Activated T-helper 2 cell treated with anti-CD3 and anti-CD28 coated beads, Interferon-gamma antibody, Interleukin-2, Interleukin-4, amounts not matched to agents 10 μg/mL and 5 μg/mL and 100 μg/mL, durations not matched to agents 14 hours and 24 hours and 36 hours (primary cell): ENCODE measurements at regions of chr2 and their contacts with region 1.

Region 1: DNA sequence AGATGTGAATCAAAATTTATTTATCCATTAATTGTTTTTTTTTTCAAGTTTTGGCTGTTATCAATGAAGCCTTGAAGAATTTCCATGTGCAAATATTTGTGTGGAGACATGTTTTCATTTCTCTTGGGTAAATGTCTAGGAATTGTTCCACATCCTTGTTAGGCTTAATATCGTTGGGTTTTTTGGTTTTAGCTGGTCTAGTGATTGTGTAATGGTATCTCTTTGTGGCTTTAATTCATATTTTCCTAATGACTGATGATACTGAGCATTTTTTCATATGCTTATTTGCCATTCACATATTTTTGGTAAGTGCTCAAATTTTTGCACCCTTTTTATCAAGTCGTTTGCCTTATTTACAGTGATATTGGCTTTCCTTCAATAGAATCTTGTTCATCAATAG is 250.3 kb upstream of the EPHA4 start:
- DNase-seq: no peak
- H3K4me3 Mint-ChIP-seq: no peak overlapping the region
- H3K27ac Mint-ChIP-seq: no peak overlapping the region
- H3K4me1 Mint-ChIP-seq: no peaks in the 10 kb centered on the region
- H3K27me3 Mint-ChIP-seq: no peaks in the 10 kb centered on the region

Region 2: GRCh38 chr2:220748875-220749479 is 1073.4 kb before region 1 on chr2:
- intact Hi-C with region 1: loop called (anchors 10 kb)
- DNase-seq: no peak
- H3K4me3 Mint-ChIP-seq: no peak overlapping the region
- H3K27ac Mint-ChIP-seq: no peak overlapping the region
- H3K4me1 Mint-ChIP-seq: no peaks in the 10 kb centered on the region
- H3K27me3 Mint-ChIP-seq: no peaks in the 10 kb centered on the region

Region 3: DNA sequence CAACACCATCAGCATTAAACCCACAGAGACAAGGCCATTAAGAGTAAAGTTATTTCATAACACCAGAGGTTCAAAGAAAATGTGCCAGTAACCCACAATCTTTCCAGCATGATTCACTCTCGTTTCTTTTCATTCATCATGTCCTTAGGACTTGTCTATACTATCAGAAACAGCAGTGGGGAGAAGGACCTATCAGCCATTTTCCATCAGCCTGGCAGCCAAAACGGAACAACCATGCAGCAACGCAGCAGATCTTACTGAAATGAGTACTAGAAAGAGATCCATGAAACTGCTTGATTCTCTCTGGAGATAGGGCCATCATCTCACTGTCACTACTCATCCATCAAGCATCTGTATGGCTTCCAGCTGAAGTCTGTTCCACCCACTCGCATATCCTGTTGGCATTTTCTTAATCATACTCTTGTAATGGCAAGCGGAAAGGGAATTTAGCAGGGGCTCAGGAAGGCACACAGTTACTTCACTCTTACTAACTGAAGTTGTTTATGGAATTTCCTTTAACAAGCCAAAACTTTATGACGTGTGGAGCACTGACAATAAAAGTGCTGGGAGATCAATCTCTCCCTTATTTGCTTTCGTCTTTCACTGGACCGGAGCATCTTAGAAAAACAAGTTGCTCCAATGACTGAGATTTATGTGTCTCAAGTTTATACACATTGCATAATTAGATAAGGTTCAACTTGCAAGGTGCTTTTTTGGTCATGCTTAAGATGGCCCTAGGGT is 320.0 kb before region 1 on chr2:
- intact Hi-C with region 1: no loop called
- DNase-seq: no peak
- H3K4me3 Mint-ChIP-seq: no peak overlapping the region
- H3K27ac Mint-ChIP-seq: no peak overlapping the region
- H3K4me1 Mint-ChIP-seq: peaks cover 8% of the 10 kb centered on the region
- H3K27me3 Mint-ChIP-seq: peaks cover 10% of the 10 kb centered on the region